ENCODE measurements at regions of chr1 and their contacts with region 1.

Region 1: DNA sequence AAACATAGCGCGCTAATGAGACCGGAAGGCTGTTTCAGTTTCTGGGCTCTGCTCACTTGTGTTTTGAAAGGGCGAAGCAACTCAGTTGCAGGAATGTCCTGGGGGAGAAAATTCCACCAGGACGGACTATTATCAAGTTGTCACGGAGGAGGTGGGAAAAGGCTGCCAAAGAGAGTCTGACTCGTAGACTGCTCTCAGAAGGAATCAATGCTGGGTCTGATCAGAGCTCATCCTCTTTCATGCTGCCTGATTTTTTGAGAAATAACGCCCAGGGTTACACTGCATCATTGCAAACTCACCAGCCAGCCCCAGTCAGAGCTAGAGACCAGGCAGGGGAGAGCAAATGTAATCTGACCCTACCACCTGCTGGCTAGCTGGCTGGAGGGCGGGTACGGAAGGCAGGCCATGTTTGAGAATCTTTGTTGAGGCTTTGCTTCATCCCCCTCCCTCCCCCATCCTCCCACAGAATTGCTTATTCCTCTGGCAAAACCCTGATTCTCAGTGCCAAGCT is 36.4 kb upstream of the BCL9 start:
- DNase-seq: no peak
- ATAC-seq: peak; percentile 34

Region 2: GRCh38 chr1:147890177-147890790 is 385.4 kb after region 1 on chr1:
- intact Hi-C with region 1: loop called (anchors 10 kb)
- DNase-seq: peak; percentile 79
- ATAC-seq: peak; percentile 67

Measured in sciatic nerve (tissue), 2 donors.